ENCODE measurements at regions of chr7 and their contacts with region 1.

Region 1: GRCh38 chr7:19982841-19983835 is 209.7 kb upstream of the TMEM196 start:
- DNase-seq: no peak
- ATAC-seq: peak; percentile 50
- H3K4me3 Mint-ChIP-seq: no peak overlapping the region
- H3K27ac Mint-ChIP-seq: no peak overlapping the region
- H3K4me1 Mint-ChIP-seq: no peaks in the 10 kb centered on the region
- H3K27me3 Mint-ChIP-seq: no peaks in the 10 kb centered on the region
- CTCF ChIP-seq: no peak

Region 2: GRCh38 chr7:19747740-19748339 is 235.3 kb before region 1 on chr7:
- CTCF ChIA-PET with region 1: interaction called, 10 read pairs
- POLR2A ChIA-PET with region 1: no interaction called
- intact Hi-C with region 1: loop called (anchors 5 kb)
- DNase-seq: no peak
- ATAC-seq: peak; percentile 25
- H3K4me3 Mint-ChIP-seq: no peak overlapping the region
- H3K27ac Mint-ChIP-seq: no peak overlapping the region
- H3K4me1 Mint-ChIP-seq: no peaks in the 10 kb centered on the region
- H3K27me3 Mint-ChIP-seq: peaks cover 6% of the 10 kb centered on the region
- CTCF ChIP-seq: no peak

Region 3: DNA sequence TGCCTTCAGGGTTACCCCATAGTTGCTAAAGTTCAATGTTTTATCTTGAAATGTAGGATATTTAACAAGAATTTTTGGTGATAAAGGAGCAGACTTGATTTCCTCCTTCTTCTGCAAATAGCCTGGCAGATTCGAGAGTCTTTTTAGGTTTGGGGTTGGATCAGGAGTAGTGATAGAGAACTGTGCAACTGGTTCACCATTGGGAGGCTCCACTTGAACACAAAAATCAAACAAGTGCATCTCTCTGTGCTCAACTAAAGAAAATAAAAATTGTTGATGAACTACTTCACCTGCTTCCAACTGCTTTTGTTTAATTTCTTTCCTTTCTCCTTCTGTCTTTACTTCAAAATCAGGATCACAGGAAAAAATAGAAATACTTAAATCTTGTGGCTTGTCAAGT is 175.5 kb after region 1 on chr7:
- CTCF ChIA-PET with region 1: interaction called, 3 read pairs
- POLR2A ChIA-PET with region 1: no interaction called
- intact Hi-C with region 1: loop called (anchors 5 kb)
- DNase-seq: no peak
- ATAC-seq: no peak
- H3K4me3 Mint-ChIP-seq: no peak overlapping the region
- H3K27ac Mint-ChIP-seq: no peak overlapping the region
- H3K4me1 Mint-ChIP-seq: peaks cover 16% of the 10 kb centered on the region
- H3K27me3 Mint-ChIP-seq: no peaks in the 10 kb centered on the region
- CTCF ChIP-seq: no peak

Region 4: GRCh38 chr7:20296444-20296843 is 313.3 kb after region 1 on chr7:
- CTCF ChIA-PET with region 1: no interaction called
- POLR2A ChIA-PET with region 1: no interaction called
- intact Hi-C with region 1: no loop called
- DNase-seq: no peak
- ATAC-seq: no peak
- H3K4me3 Mint-ChIP-seq: no peak overlapping the region
- H3K27ac Mint-ChIP-seq: no peak overlapping the region
- H3K4me1 Mint-ChIP-seq: peaks cover 36% of the 10 kb centered on the region
- H3K27me3 Mint-ChIP-seq: no peaks in the 10 kb centered on the region
- CTCF ChIP-seq: no peak

Region 5: DNA sequence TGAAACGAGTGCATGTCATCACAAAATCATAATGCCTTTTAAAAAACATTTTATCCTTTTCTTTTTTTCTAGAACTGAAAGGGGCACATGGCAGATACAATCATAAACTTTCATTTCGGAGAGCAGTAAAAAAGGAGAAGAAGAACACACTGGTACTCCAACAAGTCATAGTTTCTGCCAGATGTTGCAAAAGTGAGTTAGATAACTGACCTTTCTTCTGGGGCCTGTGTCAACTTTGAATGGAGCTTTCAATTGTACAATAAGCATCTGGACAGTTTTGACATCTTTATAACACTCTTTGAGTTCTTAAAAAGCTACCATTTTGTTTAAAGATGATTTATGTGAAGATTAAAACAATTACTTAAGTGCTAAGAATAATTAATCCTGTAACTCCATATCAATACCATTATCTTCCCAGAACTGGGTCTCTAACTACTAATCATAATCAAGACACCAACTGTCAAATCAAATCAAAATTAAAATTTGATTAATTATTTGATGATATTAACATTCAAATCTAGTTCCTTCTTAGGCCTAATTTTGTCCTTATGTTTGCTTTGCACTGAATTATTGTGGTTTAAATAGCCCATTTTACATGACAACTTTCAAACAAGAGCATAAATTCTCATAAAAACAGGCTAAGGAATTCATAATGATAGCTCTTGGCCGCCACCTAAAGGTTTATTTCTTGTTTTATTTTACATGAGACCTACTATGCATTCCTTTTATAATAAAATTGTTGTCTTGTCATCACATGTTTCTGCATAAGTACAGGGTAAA is 328.0 kb after region 1 on chr7:
- CTCF ChIA-PET with region 1: interaction called, 55 read pairs
- POLR2A ChIA-PET with region 1: no interaction called
- intact Hi-C with region 1: loop called (anchors 1 kb)
- DNase-seq: no peak
- ATAC-seq: peak; percentile 37
- H3K4me3 Mint-ChIP-seq: no peak overlapping the region
- H3K27ac Mint-ChIP-seq: peak overlapping the region; percentile 64
- H3K4me1 Mint-ChIP-seq: peaks cover 16% of the 10 kb centered on the region
- H3K27me3 Mint-ChIP-seq: no peaks in the 10 kb centered on the region
- CTCF ChIP-seq: peak; percentile 31

Region 6: GRCh38 chr7:20438694-20439376 is 455.7 kb after region 1 on chr7:
- CTCF ChIA-PET with region 1: interaction called, 3 read pairs
- POLR2A ChIA-PET with region 1: no interaction called
- intact Hi-C with region 1: loop called (anchors 10 kb)
- DNase-seq: no peak
- ATAC-seq: peak; percentile 88
- H3K4me3 Mint-ChIP-seq: peak overlapping the region; percentile 13
- H3K27ac Mint-ChIP-seq: no peak overlapping the region
- H3K4me1 Mint-ChIP-seq: peaks cover 28% of the 10 kb centered on the region
- H3K27me3 Mint-ChIP-seq: peaks cover 7% of the 10 kb centered on the region
- CTCF ChIP-seq: no peak